ENCODE measurements at regions of chr12 and their contacts with region 1.

Region 1: GRCh38 chr12:14365294-14366208 is at the start of gene ATF7IP:
- DNase-seq: peak; percentile 96
- ATAC-seq: peak; percentile 99
- H3K4me3 ChIP-seq: peak within 1 kb of the TSS; percentile 75
- H3K27ac ChIP-seq: peak within 1 kb of the TSS; percentile 88
- H3K4me1 ChIP-seq: no peaks in the 10 kb centered on the region; the same call in 1 of the 2 replicates
- H3K27me3 ChIP-seq: no peaks in the 10 kb centered on the region
- CTCF ChIP-seq: peak; percentile 35
- POLR2A ChIP-seq: peak; percentile 74
- RAD21 ChIP-seq: no peak
- total RNA-seq, gene ATF7IP: 22.8 and 30.6 TPM in 2 replicates

Region 2: DNA sequence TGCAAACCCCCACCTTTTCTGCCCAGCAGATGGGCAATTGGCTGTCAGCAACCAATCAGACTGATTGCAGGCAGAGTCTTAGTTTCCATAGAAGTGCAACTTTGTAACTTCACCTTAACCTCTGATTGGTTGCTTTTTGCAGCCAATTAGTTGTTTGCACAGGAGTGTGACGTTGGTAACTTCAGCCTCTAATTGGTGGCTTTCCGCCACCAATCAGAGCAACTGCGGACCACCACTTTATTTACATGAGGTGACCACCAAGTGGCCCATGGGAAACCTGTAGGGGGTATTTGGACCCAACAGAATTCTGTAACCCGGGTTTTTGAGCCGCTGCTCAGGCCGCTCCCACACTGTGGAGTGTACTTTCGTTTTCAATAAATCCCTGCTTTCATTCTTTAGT is 1616.1 kb before region 1 on chr12:
- CTCF ChIA-PET with region 1: no interaction called
- POLR2A ChIA-PET with region 1: no interaction called
- dilution Hi-C with region 1: no loop called
- in situ Hi-C with region 1: no loop called
- intact Hi-C with region 1: no loop called
- DNase-seq: no peak
- ATAC-seq: no peak
- H3K4me3 ChIP-seq: no peak overlapping the region
- H3K27ac ChIP-seq: no peak overlapping the region
- H3K4me1 ChIP-seq: peaks cover 5% of the 10 kb centered on the region; the same call in 1 of the 2 replicates
- H3K27me3 ChIP-seq: no peaks in the 10 kb centered on the region
- CTCF ChIP-seq: no peak
- POLR2A ChIP-seq: no peak
- RAD21 ChIP-seq: no peak

Region 3: GRCh38 chr12:14239350-14239934 is 126.1 kb before region 1 on chr12:
- CTCF ChIA-PET with region 1: interaction called, 7 read pairs
- POLR2A ChIA-PET with region 1: no interaction called
- dilution Hi-C with region 1: no loop called
- in situ Hi-C with region 1: no loop called
- intact Hi-C with region 1: loop called (anchors 1 kb)
- DNase-seq: no peak
- ATAC-seq: peak; percentile 54
- H3K4me3 ChIP-seq: no peak overlapping the region
- H3K27ac ChIP-seq: no peak overlapping the region
- H3K4me1 ChIP-seq: peaks cover 4% of the 10 kb centered on the region; the same call in 1 of the 2 replicates
- H3K27me3 ChIP-seq: no peaks in the 10 kb centered on the region
- CTCF ChIP-seq: no peak
- POLR2A ChIP-seq: no peak
- RAD21 ChIP-seq: no peak

Region 4: GRCh38 chr12:14322403-14322802 is 43.1 kb before region 1 on chr12:
- CTCF ChIA-PET with region 1: no interaction called
- POLR2A ChIA-PET with region 1: no interaction called
- dilution Hi-C with region 1: no loop called
- in situ Hi-C with region 1: no loop called
- intact Hi-C with region 1: loop called (anchors 2 kb)
- DNase-seq: peak; percentile 70
- ATAC-seq: peak; percentile 86
- H3K4me3 ChIP-seq: no peak overlapping the region
- H3K27ac ChIP-seq: peak overlapping the region; percentile 95; the same call in 1 of the 2 replicates
- H3K4me1 ChIP-seq: peaks cover 10% of the 10 kb centered on the region
- H3K27me3 ChIP-seq: no peaks in the 10 kb centered on the region
- CTCF ChIP-seq: no peak
- POLR2A ChIP-seq: no peak
- RAD21 ChIP-seq: no peak

Region 5: GRCh38 chr12:14417715-14418114 is 52.2 kb after region 1 on chr12:
- CTCF ChIA-PET with region 1: interaction called, 4 read pairs
- POLR2A ChIA-PET with region 1: no interaction called
- dilution Hi-C with region 1: no loop called
- in situ Hi-C with region 1: no loop called
- intact Hi-C with region 1: loop called (anchors 1 kb)
- DNase-seq: peak; percentile 92
- ATAC-seq: peak; percentile 86
- H3K4me3 ChIP-seq: no peak overlapping the region
- H3K27ac ChIP-seq: no peak overlapping the region
- H3K4me1 ChIP-seq: peaks cover 2% of the 10 kb centered on the region; the same call in 1 of the 2 replicates
- H3K27me3 ChIP-seq: no peaks in the 10 kb centered on the region
- CTCF ChIP-seq: no peak
- POLR2A ChIP-seq: no peak
- RAD21 ChIP-seq: no peak

Region 6: GRCh38 chr12:15011162-15011561 is 645.6 kb after region 1 on chr12:
- CTCF ChIA-PET with region 1: no interaction called
- POLR2A ChIA-PET with region 1: no interaction called
- dilution Hi-C with region 1: no loop called
- in situ Hi-C with region 1: no loop called
- intact Hi-C with region 1: no loop called
- DNase-seq: no peak
- ATAC-seq: peak; percentile 49
- H3K4me3 ChIP-seq: no peak overlapping the region
- H3K27ac ChIP-seq: no peak overlapping the region
- H3K4me1 ChIP-seq: no peaks in the 10 kb centered on the region
- H3K27me3 ChIP-seq: peaks cover 3% of the 10 kb centered on the region; the same call in 1 of the 2 replicates
- CTCF ChIP-seq: no peak; the same call in 1 of the 2 replicates
- POLR2A ChIP-seq: no peak
- RAD21 ChIP-seq: no peak